Prostate gland (tissue), 2 donors: ENCODE measurements at regions of chr16 and their contacts with region 1.

Region 1: DNA sequence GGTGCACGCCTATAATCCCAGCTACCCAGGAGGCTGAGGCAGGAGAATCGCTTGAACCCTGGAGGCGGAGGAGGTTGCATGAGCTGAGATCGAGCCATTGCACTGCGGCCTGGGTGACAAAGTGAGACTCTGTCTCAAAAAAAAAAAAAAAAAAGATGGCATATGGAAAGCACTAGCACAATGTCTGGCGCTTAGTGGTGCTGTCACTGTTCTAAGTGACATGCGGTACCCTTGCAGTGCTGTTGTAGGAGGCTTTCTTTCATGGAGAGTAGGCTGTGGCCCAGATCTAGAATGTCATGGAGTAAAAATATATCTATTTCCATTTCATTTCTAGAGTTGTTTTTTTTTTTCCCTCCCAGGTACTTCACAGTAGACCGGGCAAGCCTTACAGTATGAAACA is 14.6 kb upstream of the METTL9 start:
- DNase-seq: no peak
- H3K4me3 ChIP-seq: no peak overlapping the region
- H3K27ac ChIP-seq: no peak overlapping the region
- H3K4me1 ChIP-seq: no peaks in the 10 kb centered on the region
- H3K27me3 ChIP-seq: no peaks in the 10 kb centered on the region
- CTCF ChIP-seq: no peak
- POLR2A ChIP-seq: no peak

Region 2: GRCh38 chr16:21300309-21301167 is 284.3 kb before region 1 on chr16:
- intact Hi-C with region 1: no loop called
- DNase-seq: peak; percentile 99
- H3K4me3 ChIP-seq: peak overlapping the region; percentile 41 to 59
- H3K27ac ChIP-seq: peak overlapping the region; percentile 75 to 81
- H3K4me1 ChIP-seq: no peaks in the 10 kb centered on the region
- H3K27me3 ChIP-seq: no peaks in the 10 kb centered on the region
- CTCF ChIP-seq: peak; percentile 54 to 98 (median 91)
- POLR2A ChIP-seq: peak; percentile 78

Region 3: DNA sequence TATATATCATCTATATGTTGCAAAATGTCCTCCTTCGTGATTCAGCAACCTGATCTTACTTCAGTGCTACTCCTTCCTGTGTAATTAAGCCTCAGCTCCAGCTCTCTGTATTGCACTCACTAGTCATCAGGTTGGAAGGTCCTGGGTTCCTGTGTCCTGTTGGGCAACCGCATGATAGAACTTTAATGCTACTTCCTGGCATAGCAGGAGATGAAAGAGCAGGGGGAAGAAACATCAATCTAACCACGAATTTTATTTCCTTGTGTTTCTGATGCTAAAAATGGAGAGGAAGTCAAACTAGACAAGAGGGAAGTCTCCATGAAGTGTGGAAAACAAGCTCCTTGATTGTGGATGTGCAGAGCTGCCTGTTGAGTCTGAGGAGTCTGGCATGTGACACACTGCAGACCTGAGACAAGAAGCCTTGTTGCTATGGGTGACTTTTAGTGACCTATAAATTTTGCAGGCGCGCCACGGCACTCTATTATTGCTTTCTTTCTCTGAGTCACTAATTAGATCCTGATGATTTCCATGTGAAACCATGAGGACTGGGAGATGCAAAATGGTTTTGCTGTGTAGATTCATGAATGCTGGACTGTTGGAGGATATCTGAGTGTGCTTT is 42.0 kb after region 1 on chr16:
- intact Hi-C with region 1: no loop called
- DNase-seq: no peak
- H3K4me3 ChIP-seq: no peak overlapping the region
- H3K27ac ChIP-seq: no peak overlapping the region
- H3K4me1 ChIP-seq: no peaks in the 10 kb centered on the region
- H3K27me3 ChIP-seq: no peaks in the 10 kb centered on the region
- CTCF ChIP-seq: no peak
- POLR2A ChIP-seq: no peak

Region 4: GRCh38 chr16:21673469-21673868 is 88.7 kb after region 1 on chr16:
- intact Hi-C with region 1: no loop called
- DNase-seq: no peak
- H3K4me3 ChIP-seq: no peak overlapping the region
- H3K27ac ChIP-seq: no peak overlapping the region
- H3K4me1 ChIP-seq: no peaks in the 10 kb centered on the region
- H3K27me3 ChIP-seq: no peaks in the 10 kb centered on the region
- CTCF ChIP-seq: no peak
- POLR2A ChIP-seq: no peak

Region 5: GRCh38 chr16:22694887-22695382 is 1110.1 kb after region 1 on chr16:
- intact Hi-C with region 1: loop called (anchors 5 kb)
- DNase-seq: no peak
- H3K4me3 ChIP-seq: no peak overlapping the region
- H3K27ac ChIP-seq: peak overlapping the region; percentile 47 to 56
- H3K4me1 ChIP-seq: no peaks in the 10 kb centered on the region
- H3K27me3 ChIP-seq: no peaks in the 10 kb centered on the region
- CTCF ChIP-seq: no peak
- POLR2A ChIP-seq: no peak